Posterior vena cava (tissue), 2 donors: ENCODE measurements at regions of chr4 and their contacts with region 1.

Region 1: GRCh38 chr4:54277691-54278090 is 48.6 kb downstream of the PDGFRA start:
- DNase-seq: no peak

Region 2: DNA sequence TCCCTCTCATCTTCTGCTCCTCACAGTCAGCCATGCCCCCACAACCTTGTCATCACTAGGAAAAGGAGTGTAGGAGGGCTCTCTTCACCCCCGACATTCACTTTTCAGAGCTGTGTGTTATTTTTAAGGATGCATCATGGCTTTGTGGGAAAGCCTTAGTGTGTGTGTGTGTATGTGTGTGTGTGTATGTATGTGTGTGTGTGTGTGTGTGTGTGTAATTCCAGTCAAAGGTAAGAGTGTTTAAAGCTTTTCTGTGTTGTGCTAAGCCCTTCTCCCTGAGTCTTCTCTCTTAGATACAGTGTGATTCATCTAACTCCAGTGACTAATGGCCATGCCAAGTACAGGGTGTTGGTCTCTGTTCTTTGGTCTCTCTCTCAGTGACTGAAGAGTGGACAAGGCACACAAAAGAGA is 289.9 kb before region 1 on chr4:
- intact Hi-C with region 1: no loop called
- DNase-seq: no peak

Region 3: GRCh38 chr4:54586320-54586955 is 308.7 kb after region 1 on chr4:
- intact Hi-C with region 1: loop called in 1 of 2 experiments (anchors 5 kb)
- DNase-seq: no peak

Region 4: GRCh38 chr4:54683616-54684346 is 406.1 kb after region 1 on chr4:
- intact Hi-C with region 1: no loop called
- DNase-seq: no peak